CD4-positive, alpha-beta T cell (primary cell): ENCODE measurements at regions of chr11 and their contacts with region 1.

Region 1: DNA sequence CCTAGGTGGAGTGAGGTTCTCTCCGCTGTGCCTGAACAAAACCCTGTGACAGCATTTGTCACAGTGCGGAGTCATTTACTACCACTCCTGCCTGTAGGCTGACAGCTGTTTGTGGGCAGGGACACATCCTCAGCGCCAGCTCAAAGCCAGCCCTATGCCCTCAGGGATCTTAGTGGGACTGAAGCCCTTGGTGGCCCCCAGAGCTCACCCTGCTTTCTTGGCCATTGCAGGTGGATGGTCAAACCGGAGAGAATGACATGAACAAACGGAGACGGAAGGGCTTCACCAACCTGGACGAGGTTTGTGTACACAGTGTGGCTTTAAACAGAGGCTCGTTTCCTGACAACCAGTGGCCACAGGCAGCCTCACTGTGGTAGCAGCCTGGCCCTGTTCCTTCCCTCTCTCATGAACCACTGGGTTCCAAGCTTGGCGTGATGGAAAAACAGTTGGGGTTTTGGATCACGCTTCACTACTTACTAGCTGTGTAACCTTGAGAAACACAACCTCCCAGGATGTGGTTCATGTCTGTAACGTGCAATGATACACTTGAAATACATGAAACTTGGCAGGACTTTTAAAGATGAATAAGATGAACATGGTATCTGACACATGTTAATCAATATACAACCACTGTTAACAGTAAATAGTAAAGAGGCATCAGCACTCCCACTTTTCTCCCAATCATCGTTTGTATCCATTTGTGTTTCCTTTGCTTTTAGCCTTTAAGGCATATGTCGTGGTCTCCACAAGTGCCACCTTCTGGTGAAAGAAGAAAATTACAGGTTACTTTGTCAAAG is 125.8 kb downstream of the MICAL2 start:
- DNase-seq: peak in 9 of 14 experiments; percentile 4 to 83 (median 40)
- ATAC-seq: peak; percentile 85
- H3K4me3 ChIP-seq: peak overlapping the region; percentile 7
- H3K4me3 Mint-ChIP-seq: peak overlapping the region; percentile 82
- H3K27ac ChIP-seq: peak overlapping the region in 1 of 2 donors; percentile 59
- H3K27ac Mint-ChIP-seq: peak overlapping the region; percentile 92
- H3K4me1 ChIP-seq: peaks cover 15% of the 10 kb centered on the region
- H3K4me1 Mint-ChIP-seq: peaks cover 30% of the 10 kb centered on the region
- H3K27me3 ChIP-seq: no peaks in the 10 kb centered on the region
- H3K27me3 Mint-ChIP-seq: no peaks in the 10 kb centered on the region
- CTCF ChIP-seq: peak; percentile 92

Region 2: DNA sequence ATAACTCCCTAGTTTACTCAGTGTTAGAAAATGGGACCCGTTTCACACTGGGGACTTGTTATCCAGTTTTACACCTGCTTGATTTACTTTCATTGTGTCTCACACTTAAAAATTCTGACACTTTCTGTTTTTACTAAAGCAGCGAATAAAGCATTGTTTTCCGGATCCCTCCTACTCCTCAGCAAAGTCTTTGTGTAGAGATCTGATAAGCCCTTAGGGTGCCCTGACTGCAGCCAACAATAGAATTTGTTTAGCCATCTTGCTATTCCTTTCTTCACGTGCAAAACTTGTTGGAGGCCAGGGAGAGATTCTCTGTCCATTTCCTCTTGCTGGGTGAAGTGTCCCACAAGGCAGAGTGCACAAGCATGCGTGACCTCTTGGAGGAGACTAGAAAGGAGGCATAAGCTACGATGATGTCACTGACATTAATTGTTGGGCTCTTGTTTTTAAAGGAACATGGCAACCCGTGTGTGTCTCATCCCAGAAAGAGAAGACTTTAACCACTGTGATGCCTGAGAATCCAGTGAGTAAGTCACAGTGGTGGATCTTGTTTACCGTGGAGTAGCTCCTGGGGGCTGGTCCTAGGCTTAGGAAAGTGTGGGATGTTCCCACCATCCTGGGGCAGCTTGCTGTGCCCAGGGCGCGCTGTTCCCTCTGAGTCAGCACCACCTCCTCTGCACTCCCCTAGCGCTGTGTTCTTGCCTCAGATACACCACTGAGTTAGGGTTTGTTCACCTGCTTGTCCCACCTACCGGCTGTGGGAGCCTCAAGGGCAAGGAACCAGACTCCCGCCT is 98.0 kb before region 1 on chr11:
- CTCF ChIA-PET with region 1: no interaction called
- POLR2A ChIA-PET with region 1: no interaction called
- intact Hi-C with region 1: loop called in 1 of 2 experiments (anchors 10 kb)
- DNase-seq: no peak
- ATAC-seq: no peak
- H3K4me3 ChIP-seq: no peak overlapping the region
- H3K4me3 Mint-ChIP-seq: no peak overlapping the region
- H3K27ac ChIP-seq: no peak overlapping the region
- H3K27ac Mint-ChIP-seq: peak overlapping the region; percentile 78
- H3K4me1 ChIP-seq: peaks cover 55% of the 10 kb centered on the region
- H3K4me1 Mint-ChIP-seq: peaks cover 67% of the 10 kb centered on the region
- H3K27me3 ChIP-seq: no peaks in the 10 kb centered on the region
- H3K27me3 Mint-ChIP-seq: no peaks in the 10 kb centered on the region
- CTCF ChIP-seq: no peak

Region 3: GRCh38 chr11:12200279-12201010 is 35.7 kb before region 1 on chr11:
- CTCF ChIA-PET with region 1: no interaction called
- POLR2A ChIA-PET with region 1: interaction called, 24 read pairs
- intact Hi-C with region 1: loop called in 1 of 2 experiments (anchors 1 kb)
- DNase-seq: peak in 2 of 14 experiments; percentile 27 to 28
- ATAC-seq: no peak
- H3K4me3 ChIP-seq: no peak overlapping the region
- H3K4me3 Mint-ChIP-seq: no peak overlapping the region
- H3K27ac ChIP-seq: peak overlapping the region in 1 of 2 donors; percentile 22
- H3K27ac Mint-ChIP-seq: peak overlapping the region; percentile 89
- H3K4me1 ChIP-seq: peaks cover 53% of the 10 kb centered on the region
- H3K4me1 Mint-ChIP-seq: peaks cover 70% of the 10 kb centered on the region
- H3K27me3 ChIP-seq: no peaks in the 10 kb centered on the region
- H3K27me3 Mint-ChIP-seq: no peaks in the 10 kb centered on the region
- CTCF ChIP-seq: no peak